Activated naive CD8-positive, alpha-beta T cell treated with anti-CD3 and anti-CD28 coated beads, Interleukin-2, amount 10 ng/mL, durations not matched to agents 7 days and 5 days (primary cell): ENCODE measurements at regions of chr17 and their contacts with region 1.

Region 1: GRCh38 chr17:68457539-68458259 is 403 bp upstream of the WIPI1 start:
- DNase-seq: peak; percentile 99
- ATAC-seq: peak; percentile 92
- H3K4me3 Mint-ChIP-seq: peak overlapping the region; percentile 81
- H3K27ac Mint-ChIP-seq: peak overlapping the region; percentile 84
- H3K4me1 Mint-ChIP-seq: peaks cover 67% of the 10 kb centered on the region
- H3K27me3 Mint-ChIP-seq: no peaks in the 10 kb centered on the region

Region 2: DNA sequence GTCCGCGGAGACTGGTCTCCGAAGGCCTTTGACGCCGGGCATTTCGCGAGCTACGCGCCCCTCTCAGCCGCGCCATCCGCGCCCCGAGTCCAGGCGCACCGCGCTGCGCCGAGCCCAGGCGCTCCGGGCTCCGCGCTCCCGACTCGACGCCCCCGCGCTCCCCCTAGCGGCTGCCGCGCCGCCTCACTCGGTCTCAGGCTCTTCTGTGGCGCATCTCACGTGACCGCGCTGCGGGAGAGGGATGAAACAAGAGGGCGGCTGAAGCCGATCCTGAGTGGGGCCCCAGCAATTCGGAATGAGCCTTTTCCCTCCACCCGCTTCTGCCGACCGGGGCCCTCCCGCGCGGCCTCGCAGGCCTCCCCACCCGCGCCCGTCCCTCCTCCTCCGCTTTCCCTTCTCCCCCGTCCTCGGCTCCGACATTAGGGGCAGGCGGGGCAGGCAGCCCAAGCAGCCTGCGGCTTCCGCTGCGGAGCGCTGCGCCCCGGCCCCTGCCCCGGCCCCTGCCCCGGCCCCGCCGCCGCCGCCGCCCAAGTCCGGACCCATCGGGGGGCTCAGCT is 252.4 kb before region 1 on chr17:
- POLR2A ChIA-PET with region 1: interaction called, 23 read pairs
- DNase-seq: peak; percentile 99
- ATAC-seq: peak; percentile 87
- H3K4me3 Mint-ChIP-seq: peak overlapping the region; percentile 89
- H3K27ac Mint-ChIP-seq: peak overlapping the region; percentile 87
- H3K4me1 Mint-ChIP-seq: peaks cover 18% of the 10 kb centered on the region
- H3K27me3 Mint-ChIP-seq: peaks cover 22% of the 10 kb centered on the region

Region 3: GRCh38 chr17:68247445-68248198 is 210.1 kb before region 1 on chr17 and contains the start of gene AMZ2:
- POLR2A ChIA-PET with region 1: interaction called, 31 read pairs
- DNase-seq: peak; percentile 100
- ATAC-seq: peak; percentile 87
- H3K4me3 Mint-ChIP-seq: peak within 1 kb of the TSS; percentile 89
- H3K27ac Mint-ChIP-seq: peak within 1 kb of the TSS; percentile 98
- H3K4me1 Mint-ChIP-seq: peaks cover 30% of the 10 kb centered on the region
- H3K27me3 Mint-ChIP-seq: no peaks in the 10 kb centered on the region
- total RNA-seq, gene AMZ2: 84.2 to 84.5 TPM

Region 4: DNA sequence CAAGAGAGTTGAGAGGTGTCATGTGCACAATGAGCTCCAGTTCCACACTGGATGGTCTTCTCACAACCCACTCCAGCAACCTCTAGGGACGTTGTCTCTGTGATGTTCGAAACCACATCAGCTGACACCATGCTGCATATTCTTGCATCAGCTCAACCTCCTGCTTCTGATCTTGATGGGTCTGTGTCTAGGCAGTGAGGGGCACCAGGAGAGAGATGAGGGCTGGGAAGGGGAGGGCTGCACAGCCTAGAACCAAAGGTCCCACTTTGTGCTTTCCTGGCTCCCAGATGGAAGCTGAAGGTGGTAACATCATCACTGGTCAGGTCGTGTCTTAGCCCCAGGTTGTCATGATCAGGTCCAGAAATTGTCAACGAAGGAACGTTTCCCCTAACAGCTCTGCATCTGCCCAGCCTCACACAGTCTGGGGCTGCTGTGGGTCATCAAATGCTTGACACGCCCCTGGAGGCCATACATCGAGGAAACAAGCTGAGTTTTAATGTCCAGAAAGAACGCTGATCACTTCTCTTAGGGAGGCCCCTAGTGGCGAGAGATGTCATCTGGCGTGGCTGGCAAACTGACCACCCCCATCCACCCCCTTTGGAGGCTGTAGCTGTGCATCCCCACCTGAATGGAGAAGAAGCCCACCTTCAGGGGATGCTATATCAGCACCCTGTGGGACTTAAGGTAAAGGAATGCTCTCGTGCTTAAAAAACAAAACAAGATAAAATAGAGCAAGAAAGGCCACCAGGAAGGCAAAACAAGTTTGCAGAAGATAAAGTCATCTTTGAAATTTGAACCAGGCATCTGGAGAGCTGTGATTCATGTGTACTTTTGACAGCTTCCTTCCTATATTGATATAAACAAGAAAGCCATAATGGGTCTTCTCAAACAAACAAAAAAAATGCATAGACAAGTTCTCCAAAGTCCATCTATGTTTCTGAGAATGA is 58.7 kb before region 1 on chr17:
- POLR2A ChIA-PET with region 1: interaction called, 11 read pairs
- DNase-seq: peak; percentile 52
- ATAC-seq: peak; percentile 79
- H3K4me3 Mint-ChIP-seq: peak overlapping the region; percentile 65
- H3K27ac Mint-ChIP-seq: peak overlapping the region; percentile 94
- H3K4me1 Mint-ChIP-seq: peaks cover 26% of the 10 kb centered on the region
- H3K27me3 Mint-ChIP-seq: no peaks in the 10 kb centered on the region

Region 5: GRCh38 chr17:68435876-68436842 is 21.5 kb before region 1 on chr17:
- POLR2A ChIA-PET with region 1: interaction called, 111 read pairs
- DNase-seq: peak; percentile 77
- ATAC-seq: peak; percentile 69
- H3K4me3 Mint-ChIP-seq: peak overlapping the region; percentile 49
- H3K27ac Mint-ChIP-seq: peak overlapping the region; percentile 86
- H3K4me1 Mint-ChIP-seq: peaks cover 38% of the 10 kb centered on the region
- H3K27me3 Mint-ChIP-seq: no peaks in the 10 kb centered on the region

Region 6: GRCh38 chr17:68468334-68468733 is 10.6 kb after region 1 on chr17:
- POLR2A ChIA-PET with region 1: no interaction called
- DNase-seq: no peak
- ATAC-seq: no peak
- H3K4me3 Mint-ChIP-seq: no peak overlapping the region
- H3K27ac Mint-ChIP-seq: no peak overlapping the region
- H3K4me1 Mint-ChIP-seq: peaks cover 8% of the 10 kb centered on the region
- H3K27me3 Mint-ChIP-seq: peaks cover 31% of the 10 kb centered on the region

Region 7: DNA sequence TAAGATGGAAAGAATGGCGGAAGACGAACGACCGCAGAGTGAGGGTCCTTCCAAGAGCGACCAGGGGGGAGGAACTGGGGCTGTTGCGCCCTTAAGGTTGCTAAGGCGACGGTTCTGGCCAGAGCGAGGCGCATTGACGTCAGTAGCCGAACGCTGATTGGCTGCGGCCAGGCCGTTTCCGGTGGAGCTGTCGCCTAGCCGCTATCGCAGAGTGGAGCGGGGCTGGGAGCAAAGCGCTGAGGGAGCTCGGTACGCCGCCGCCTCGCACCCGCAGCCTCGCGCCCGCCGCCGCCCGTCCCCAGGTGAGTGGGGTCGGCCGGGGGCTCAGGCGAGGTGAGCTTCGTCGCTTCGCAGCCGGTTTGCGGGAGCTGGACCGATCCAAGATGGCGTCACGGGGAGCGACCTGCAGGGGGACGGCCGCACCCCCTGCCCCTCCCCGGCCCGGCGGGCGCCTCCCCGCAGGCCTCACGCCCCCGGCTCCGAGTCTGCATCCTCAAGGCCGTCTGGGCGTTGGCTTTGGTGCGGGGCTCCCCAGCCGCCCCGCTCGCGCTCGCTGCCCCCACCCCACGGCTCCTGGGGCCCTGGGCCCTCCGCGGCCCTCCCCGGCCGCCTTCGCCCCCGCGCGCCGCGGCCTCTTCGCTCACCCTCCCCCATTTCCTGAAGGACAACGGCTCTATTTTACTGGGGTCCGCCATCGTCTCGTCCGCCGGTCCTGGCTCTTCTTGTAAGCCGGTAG is 54.7 kb after region 1 on chr17 and contains the start of gene PRKAR1A:
- POLR2A ChIA-PET with region 1: interaction called, 10 read pairs
- DNase-seq: peak; percentile 94
- ATAC-seq: peak; percentile 83
- H3K4me3 Mint-ChIP-seq: peak within 1 kb of the TSS; percentile 100
- H3K27ac Mint-ChIP-seq: peak within 1 kb of the TSS; percentile 100
- H3K4me1 Mint-ChIP-seq: peaks cover 45% of the 10 kb centered on the region
- H3K27me3 Mint-ChIP-seq: no peaks in the 10 kb centered on the region
- total RNA-seq, gene PRKAR1A: 208 to 226 TPM